ENCODE measurements at regions of chr22 and their contacts with region 1.

Region 1: GRCh38 chr22:31230871-31231621 is 18.9 kb downstream of the LIMK2 start:
- DNase-seq: peak in 8 of 9 donors; percentile 28 to 77 (median 64)
- ATAC-seq: peak; percentile 84
- H3K4me3 ChIP-seq: no peak overlapping the region
- H3K4me3 Mint-ChIP-seq: peak overlapping the region; percentile 13 to 78 (median 59)
- H3K27ac ChIP-seq: no peak overlapping the region
- H3K27ac Mint-ChIP-seq: peak overlapping the region; percentile 80 to 95 (median 91)
- H3K4me1 ChIP-seq: peaks cover 7 to 21% of the 10 kb centered on the region in 2 donors
- H3K4me1 Mint-ChIP-seq: peaks cover 49 to 57% (median 55%) of the 10 kb centered on the region in 7 donors
- H3K27me3 ChIP-seq: no peaks in the 10 kb centered on the region
- H3K27me3 Mint-ChIP-seq: no peaks in the 10 kb centered on the region

Region 2: DNA sequence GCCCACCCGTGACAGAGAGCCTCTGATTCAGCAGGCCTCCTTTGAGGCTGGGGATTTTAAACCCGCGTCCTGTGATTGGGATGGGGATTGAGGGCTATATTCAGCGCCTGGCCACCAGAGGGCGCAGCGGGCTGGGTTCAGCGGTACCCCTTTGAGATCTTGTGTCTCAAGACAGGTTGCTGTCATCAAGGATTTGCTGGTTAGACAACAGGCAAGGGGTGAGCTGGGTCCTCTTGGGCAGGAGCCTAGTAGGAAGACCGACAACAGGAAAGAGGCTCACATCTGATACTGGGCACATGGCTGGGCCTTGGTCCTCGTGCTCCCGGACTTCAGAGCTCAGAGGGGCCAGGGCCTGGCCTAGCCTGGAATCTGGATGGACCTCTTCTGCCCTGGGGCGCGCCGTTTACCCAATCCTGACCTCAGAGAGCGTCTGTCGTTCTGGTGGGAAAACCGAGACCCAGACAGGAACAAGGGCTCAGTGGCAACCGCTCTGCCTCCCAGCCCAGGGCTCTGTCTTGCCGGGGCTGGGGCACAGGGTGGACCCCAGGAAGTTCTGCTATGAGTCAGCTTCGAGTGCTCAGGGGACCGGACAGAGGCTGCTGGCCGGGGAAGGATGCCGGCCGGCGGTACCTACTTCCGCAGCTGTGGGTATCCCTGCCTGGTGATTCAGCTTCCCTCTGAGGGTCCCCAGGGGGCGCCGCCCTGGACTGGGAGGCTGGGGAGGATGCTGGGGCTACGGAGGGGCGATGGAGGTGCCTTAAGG is 596.4 kb before region 1 on chr22:
- CTCF ChIA-PET with region 1: interaction called, 3 read pairs
- POLR2A ChIA-PET with region 1: no interaction called
- intact Hi-C with region 1: loop called in 1 of 2 experiments (anchors 1 kb)
- DNase-seq: peak; percentile 79 to 91 (median 88)
- ATAC-seq: peak; percentile 76
- H3K4me3 ChIP-seq: peak overlapping the region; percentile 77
- H3K4me3 Mint-ChIP-seq: peak overlapping the region; percentile 77 to 92 (median 83)
- H3K27ac ChIP-seq: peak overlapping the region; percentile 70
- H3K27ac Mint-ChIP-seq: peak overlapping the region; percentile 75 to 93 (median 85)
- H3K4me1 ChIP-seq: peaks cover 18 to 27% of the 10 kb centered on the region in 2 donors
- H3K4me1 Mint-ChIP-seq: peaks cover 13 to 25% (median 23%) of the 10 kb centered on the region in 7 donors
- H3K27me3 ChIP-seq: no peaks in the 10 kb centered on the region
- H3K27me3 Mint-ChIP-seq: no peaks in the 10 kb centered on the region

Region 3: GRCh38 chr22:30920407-30920806 is 310.6 kb before region 1 on chr22:
- CTCF ChIA-PET with region 1: interaction called, 5 read pairs
- POLR2A ChIA-PET with region 1: interaction called, 5 read pairs
- intact Hi-C with region 1: loop called in 1 of 2 experiments (anchors 5 kb)
- DNase-seq: peak; percentile 65 to 84 (median 78)
- ATAC-seq: peak; percentile 88
- H3K4me3 ChIP-seq: no peak overlapping the region
- H3K4me3 Mint-ChIP-seq: peak overlapping the region; percentile 62 to 89 (median 77)
- H3K27ac ChIP-seq: peak overlapping the region; percentile 43
- H3K27ac Mint-ChIP-seq: peak overlapping the region; percentile 5 to 90 (median 28)
- H3K4me1 ChIP-seq: peaks cover 6 to 16% of the 10 kb centered on the region in 2 donors
- H3K4me1 Mint-ChIP-seq: peaks cover 4 to 29% (median 21%) of the 10 kb centered on the region in 7 donors
- H3K27me3 ChIP-seq: no peaks in the 10 kb centered on the region
- H3K27me3 Mint-ChIP-seq: peaks cover 0 to 2% (median 0%) of the 10 kb centered on the region in 5 donors

Region 4: DNA sequence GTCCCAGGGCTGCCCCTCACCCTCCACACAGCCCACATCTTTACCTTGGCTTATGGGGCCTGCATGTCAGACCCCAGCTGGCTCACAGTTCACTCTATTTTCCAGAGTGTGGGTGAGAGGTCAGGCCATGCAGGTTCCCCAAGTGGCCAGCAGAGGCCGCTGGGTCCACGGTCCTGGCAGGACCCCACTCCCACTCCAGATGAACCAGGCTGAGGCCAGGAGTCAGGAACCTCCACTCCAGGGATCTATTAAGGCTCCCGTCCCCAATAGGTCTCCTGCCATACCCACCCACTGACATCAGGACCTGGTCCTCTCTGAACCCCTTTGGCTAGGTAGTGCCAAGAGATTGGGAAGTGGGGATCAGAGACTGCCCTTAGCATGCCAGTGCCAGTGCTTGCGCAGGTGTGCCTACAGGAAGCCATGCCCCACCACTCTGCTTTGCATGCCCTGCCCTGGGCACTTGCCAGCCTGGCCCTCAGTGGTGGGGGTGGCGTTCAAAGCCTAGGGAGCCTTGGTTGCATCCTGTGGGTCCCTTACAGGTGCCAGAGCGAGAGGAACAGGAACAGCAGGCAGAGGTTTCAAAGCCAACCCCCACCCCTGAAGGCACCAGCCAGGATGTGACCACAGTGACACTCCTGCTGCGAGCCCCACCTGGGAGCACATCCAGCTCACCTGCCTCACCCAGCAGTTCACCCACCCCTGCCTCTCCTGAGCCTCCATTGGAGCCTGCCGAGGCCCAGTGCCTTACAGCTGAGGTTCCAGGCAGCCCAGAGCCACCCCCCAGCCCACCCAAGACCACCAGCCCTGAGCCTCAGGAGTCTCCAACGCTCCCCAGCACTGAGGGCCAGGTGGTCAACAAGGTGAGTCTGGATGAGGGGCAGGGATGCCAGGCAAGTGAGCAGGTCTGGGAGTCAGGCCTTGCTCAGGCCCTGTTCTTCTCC is 141.6 kb before region 1 on chr22:
- CTCF ChIA-PET with region 1: interaction called, 10 read pairs
- POLR2A ChIA-PET with region 1: no interaction called
- intact Hi-C with region 1: loop called (anchors 1 kb)
- DNase-seq: peak in 3 of 9 donors; percentile 25 to 31 (median 27)
- ATAC-seq: no peak
- H3K4me3 ChIP-seq: no peak overlapping the region
- H3K4me3 Mint-ChIP-seq: no peak overlapping the region
- H3K27ac ChIP-seq: no peak overlapping the region
- H3K27ac Mint-ChIP-seq: no peak overlapping the region
- H3K4me1 ChIP-seq: no peaks in the 10 kb centered on the region
- H3K4me1 Mint-ChIP-seq: peaks cover 0 to 5% (median 4%) of the 10 kb centered on the region in 7 donors
- H3K27me3 ChIP-seq: no peaks in the 10 kb centered on the region
- H3K27me3 Mint-ChIP-seq: no peaks in the 10 kb centered on the region

Region 5: GRCh38 chr22:31199183-31199582 is 31.9 kb before region 1 on chr22:
- CTCF ChIA-PET with region 1: interaction called, 24 read pairs
- POLR2A ChIA-PET with region 1: no interaction called
- intact Hi-C with region 1: loop called in 1 of 2 experiments (anchors 1 kb)
- DNase-seq: no peak
- ATAC-seq: no peak
- H3K4me3 ChIP-seq: no peak overlapping the region
- H3K4me3 Mint-ChIP-seq: no peak overlapping the region
- H3K27ac ChIP-seq: no peak overlapping the region
- H3K27ac Mint-ChIP-seq: peak overlapping the region in 1 of 9 donors; percentile 56
- H3K4me1 ChIP-seq: no peaks in the 10 kb centered on the region
- H3K4me1 Mint-ChIP-seq: peaks cover 0 to 8% (median 0%) of the 10 kb centered on the region in 7 donors
- H3K27me3 ChIP-seq: no peaks in the 10 kb centered on the region
- H3K27me3 Mint-ChIP-seq: no peaks in the 10 kb centered on the region

Region 6: DNA sequence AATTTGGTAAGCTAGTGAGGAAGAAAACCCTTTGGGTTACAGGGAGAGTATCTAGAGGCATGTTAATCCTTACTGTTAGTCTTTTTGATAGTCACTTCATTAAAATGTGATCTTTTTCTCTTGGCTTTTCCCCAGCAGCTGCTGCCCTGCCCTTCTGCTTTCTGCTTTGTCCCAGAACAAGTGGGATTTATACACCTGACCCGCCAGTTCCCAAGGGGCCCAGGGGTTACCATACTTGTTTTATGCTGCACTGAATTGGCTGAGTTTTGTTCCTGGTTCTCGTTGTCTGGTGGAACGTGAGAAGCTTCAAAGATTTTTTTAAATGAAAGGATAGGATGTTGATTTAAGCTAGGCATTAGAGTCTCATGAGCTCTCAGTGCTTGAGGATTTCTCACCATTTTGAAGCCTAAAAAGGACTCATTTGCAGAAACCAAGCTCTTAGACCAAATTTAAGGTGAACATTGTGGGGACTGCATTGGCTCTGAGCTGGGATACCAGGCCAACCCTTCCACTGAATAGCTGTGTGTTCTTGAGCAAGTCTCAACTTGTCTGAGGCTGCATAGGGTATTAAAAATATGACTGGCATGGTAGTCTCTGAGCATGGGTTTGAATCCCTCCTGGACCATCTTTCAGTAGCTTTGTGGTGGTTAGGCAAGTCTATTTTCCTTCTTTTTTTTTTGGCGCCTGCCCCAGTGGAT is 12.3 kb before region 1 on chr22:
- CTCF ChIA-PET with region 1: interaction called, 88 read pairs
- POLR2A ChIA-PET with region 1: interaction called, 73 read pairs
- intact Hi-C with region 1: no loop called
- DNase-seq: peak in 1 of 9 donors; percentile 33
- ATAC-seq: no peak
- H3K4me3 ChIP-seq: no peak overlapping the region
- H3K4me3 Mint-ChIP-seq: peak overlapping the region in 7 of 10 donors; percentile 29 to 75 (median 45)
- H3K27ac ChIP-seq: peak overlapping the region; percentile 24
- H3K27ac Mint-ChIP-seq: peak overlapping the region; percentile 36 to 98 (median 86)
- H3K4me1 ChIP-seq: peaks cover 0 to 14% of the 10 kb centered on the region in 2 donors
- H3K4me1 Mint-ChIP-seq: peaks cover 45 to 76% (median 66%) of the 10 kb centered on the region in 7 donors
- H3K27me3 ChIP-seq: no peaks in the 10 kb centered on the region
- H3K27me3 Mint-ChIP-seq: no peaks in the 10 kb centered on the region

Region 7: GRCh38 chr22:31278622-31279326 is 47.7 kb after region 1 on chr22:
- CTCF ChIA-PET with region 1: interaction called, 5 read pairs
- POLR2A ChIA-PET with region 1: interaction called, 13 read pairs
- intact Hi-C with region 1: no loop called
- DNase-seq: peak in 7 of 9 donors; percentile 67 to 85 (median 79)
- ATAC-seq: peak; percentile 75
- H3K4me3 ChIP-seq: peak overlapping the region; percentile 35
- H3K4me3 Mint-ChIP-seq: peak overlapping the region; percentile 74 to 97 (median 80)
- H3K27ac ChIP-seq: peak overlapping the region; percentile 100
- H3K27ac Mint-ChIP-seq: peak overlapping the region; percentile 96 to 100 (median 99)
- H3K4me1 ChIP-seq: peaks cover 33 to 94% of the 10 kb centered on the region in 2 donors
- H3K4me1 Mint-ChIP-seq: peaks cover 52 to 98% (median 94%) of the 10 kb centered on the region in 7 donors
- H3K27me3 ChIP-seq: no peaks in the 10 kb centered on the region
- H3K27me3 Mint-ChIP-seq: no peaks in the 10 kb centered on the region

Measured in naive thymus-derived CD4-positive, alpha-beta T cell (primary cell).